CD8-positive, alpha-beta T cell (primary cell): ENCODE measurements at regions of chr13 and their contacts with region 1.

Region 1: GRCh38 chr13:39684531-39685137 is 29.2 kb downstream of the COG6 start:
- DNase-seq: peak in 2 of 9 experiments; percentile 29 to 51
- ATAC-seq: peak; percentile 46
- H3K4me3 ChIP-seq: no peak overlapping the region
- H3K4me3 Mint-ChIP-seq: no peak overlapping the region
- H3K27ac ChIP-seq: no peak overlapping the region
- H3K27ac Mint-ChIP-seq: no peak overlapping the region
- H3K4me1 ChIP-seq: no peaks in the 10 kb centered on the region
- H3K4me1 Mint-ChIP-seq: no peaks in the 10 kb centered on the region
- H3K27me3 ChIP-seq: no peaks in the 10 kb centered on the region
- H3K27me3 Mint-ChIP-seq: no peaks in the 10 kb centered on the region
- CTCF ChIP-seq: peak; percentile 59

Region 2: DNA sequence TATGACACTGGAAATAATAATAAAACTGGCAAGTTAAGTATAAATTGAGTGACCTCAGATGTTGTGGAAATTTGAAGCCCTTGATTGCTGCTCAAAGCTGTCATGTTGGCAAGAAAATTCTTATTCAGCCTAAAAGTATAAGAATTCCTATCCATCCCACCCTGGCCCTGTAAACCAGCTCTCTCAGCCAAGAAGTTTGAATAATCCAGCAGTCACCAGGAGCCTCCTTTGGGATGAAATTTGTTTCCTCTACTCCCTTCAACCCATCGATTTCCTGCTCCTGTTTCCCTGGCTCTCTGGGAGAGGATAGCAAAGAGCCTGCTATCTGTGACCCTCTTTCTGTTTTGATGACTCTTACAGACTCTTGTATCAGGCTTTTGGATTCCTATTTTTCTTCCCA is 251.0 kb before region 1 on chr13:
- CTCF ChIA-PET with region 1: no interaction called
- POLR2A ChIA-PET with region 1: no interaction called
- intact Hi-C with region 1: no loop called
- DNase-seq: no peak
- ATAC-seq: no peak
- H3K4me3 ChIP-seq: no peak overlapping the region
- H3K4me3 Mint-ChIP-seq: no peak overlapping the region
- H3K27ac ChIP-seq: no peak overlapping the region
- H3K27ac Mint-ChIP-seq: no peak overlapping the region
- H3K4me1 ChIP-seq: no peaks in the 10 kb centered on the region
- H3K4me1 Mint-ChIP-seq: no peaks in the 10 kb centered on the region
- H3K27me3 ChIP-seq: no peaks in the 10 kb centered on the region
- H3K27me3 Mint-ChIP-seq: peaks cover 25% of the 10 kb centered on the region
- CTCF ChIP-seq: no peak

Region 3: DNA sequence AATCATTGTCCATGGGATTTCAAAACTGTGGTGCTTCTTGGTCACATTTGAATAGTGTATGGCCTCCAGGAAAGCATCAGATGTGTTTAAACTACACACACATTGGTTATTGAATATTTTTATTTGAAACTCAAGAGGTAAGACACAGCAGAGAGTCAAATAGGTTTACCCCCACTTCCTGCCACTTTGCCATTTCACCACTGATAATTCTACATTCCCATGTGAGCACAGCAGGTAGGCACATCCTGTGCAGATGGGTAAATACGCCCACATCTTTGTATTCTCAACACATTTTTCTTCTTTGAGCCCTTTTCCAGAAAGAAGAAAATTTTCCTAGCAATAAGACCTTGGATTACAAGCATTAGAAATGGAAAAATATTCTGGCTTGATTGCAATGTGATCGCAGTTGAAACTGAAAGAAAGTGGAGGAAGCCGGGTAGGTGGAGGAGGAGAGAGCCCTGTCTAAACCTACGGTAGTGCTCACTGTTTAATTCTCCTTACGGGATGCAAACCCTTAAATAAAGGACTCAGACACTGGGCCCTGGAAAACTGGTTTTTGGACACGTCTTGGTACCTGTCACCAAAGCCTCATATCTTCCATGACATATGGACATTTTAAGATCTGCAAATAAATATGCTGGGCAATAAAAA is 138.6 kb after region 1 on chr13:
- CTCF ChIA-PET with region 1: no interaction called
- POLR2A ChIA-PET with region 1: no interaction called
- intact Hi-C with region 1: no loop called
- DNase-seq: no peak
- ATAC-seq: no peak
- H3K4me3 ChIP-seq: no peak overlapping the region
- H3K4me3 Mint-ChIP-seq: peak overlapping the region; percentile 68
- H3K27ac ChIP-seq: no peak overlapping the region
- H3K27ac Mint-ChIP-seq: peak overlapping the region; percentile 28
- H3K4me1 ChIP-seq: peaks cover 15% of the 10 kb centered on the region
- H3K4me1 Mint-ChIP-seq: peaks cover 17% of the 10 kb centered on the region
- H3K27me3 ChIP-seq: peaks cover 0 to 3% of the 10 kb centered on the region in 2 experiments
- H3K27me3 Mint-ChIP-seq: no peaks in the 10 kb centered on the region
- CTCF ChIP-seq: no peak

Region 4: DNA sequence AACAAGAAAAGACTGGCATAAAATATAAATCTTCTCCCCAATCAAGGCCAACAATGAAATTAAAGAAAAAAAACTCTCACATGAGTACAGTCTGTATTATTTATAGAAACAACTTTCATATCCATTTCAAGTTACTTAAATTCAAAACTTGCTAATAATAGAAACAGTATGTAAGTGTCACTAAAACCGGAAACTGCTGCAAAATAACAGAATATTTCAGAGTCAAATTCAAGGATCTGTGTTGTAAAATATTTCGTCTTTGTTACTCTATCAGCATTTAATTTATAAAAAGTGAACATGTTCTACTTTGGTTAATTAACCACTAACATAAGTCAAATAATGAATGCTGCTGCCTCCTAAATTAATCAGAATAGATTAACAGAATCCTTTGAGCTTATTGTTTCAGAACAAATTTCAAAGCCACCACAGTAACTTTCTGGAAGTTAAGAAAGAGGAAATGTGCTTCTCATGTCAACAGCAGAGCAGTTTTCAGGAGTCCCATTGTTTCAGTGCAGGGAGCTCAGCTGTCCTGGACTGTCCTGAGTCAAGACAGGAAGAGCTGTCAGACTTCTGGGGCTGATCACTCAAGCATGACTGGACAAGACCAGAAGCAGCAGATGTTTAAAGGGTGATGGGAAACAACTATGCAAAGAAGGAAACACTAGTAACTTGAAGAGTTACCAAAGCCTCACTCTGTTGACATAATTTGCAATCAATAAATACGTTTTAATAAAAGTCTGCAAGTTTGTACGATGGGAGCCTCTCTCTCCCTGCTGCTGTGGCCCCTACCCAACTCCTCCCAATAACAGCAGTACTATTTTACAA is 904.9 kb after region 1 on chr13:
- CTCF ChIA-PET with region 1: no interaction called
- POLR2A ChIA-PET with region 1: no interaction called
- intact Hi-C with region 1: loop called in 1 of 2 experiments (anchors 10 kb)
- DNase-seq: peak in 1 of 9 experiments; percentile 39
- ATAC-seq: peak; percentile 13
- H3K4me3 ChIP-seq: peak overlapping the region in 1 of 2 experiments; percentile 11
- H3K4me3 Mint-ChIP-seq: peak overlapping the region; percentile 50
- H3K27ac ChIP-seq: peak overlapping the region in 1 of 2 experiments; percentile 44
- H3K27ac Mint-ChIP-seq: peak overlapping the region; percentile 84
- H3K4me1 ChIP-seq: peaks cover 93% of the 10 kb centered on the region
- H3K4me1 Mint-ChIP-seq: peaks cover 97% of the 10 kb centered on the region
- H3K27me3 ChIP-seq: no peaks in the 10 kb centered on the region
- H3K27me3 Mint-ChIP-seq: no peaks in the 10 kb centered on the region
- CTCF ChIP-seq: no peak

Region 5: DNA sequence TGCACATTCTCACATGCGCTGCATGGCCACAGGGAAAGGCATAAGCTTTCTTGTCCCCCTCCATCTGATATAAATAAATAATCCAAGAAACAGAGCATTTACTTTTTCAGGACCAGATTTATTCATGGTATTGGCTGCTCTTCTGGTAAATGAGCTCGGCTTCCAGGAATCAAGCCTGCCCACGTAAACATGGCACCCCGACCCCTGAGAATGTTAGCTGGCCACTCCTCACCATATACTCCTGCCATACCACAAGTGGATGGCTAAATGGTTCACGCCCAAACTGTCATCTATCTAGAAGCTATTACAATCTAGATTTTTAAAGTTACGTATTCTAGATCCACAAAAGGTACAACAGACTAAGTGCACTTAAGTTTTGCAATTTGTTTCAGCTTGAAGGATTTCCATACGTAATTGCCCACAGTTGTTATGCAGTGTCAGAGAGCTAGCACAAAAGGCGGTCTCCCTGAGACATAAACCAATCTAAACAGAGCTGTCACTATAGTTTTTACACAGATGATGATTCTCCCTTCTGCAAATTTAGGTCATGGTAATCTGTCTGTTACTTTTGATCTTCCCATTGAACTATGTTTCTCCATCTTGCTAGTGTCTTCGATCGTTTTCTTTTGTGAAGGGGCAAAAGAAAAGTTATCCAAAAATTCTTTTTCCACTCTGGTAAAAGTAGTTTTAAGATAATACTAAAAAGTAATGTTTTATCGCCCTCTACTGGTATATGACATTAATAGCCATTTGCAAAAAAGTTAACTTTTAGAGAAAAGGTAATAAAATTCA is 998.0 kb after region 1 on chr13:
- CTCF ChIA-PET with region 1: interaction called, 29 read pairs
- POLR2A ChIA-PET with region 1: no interaction called
- intact Hi-C with region 1: loop called in 1 of 2 experiments (anchors 1 kb)
- DNase-seq: peak in 2 of 9 experiments; percentile 27 to 51
- ATAC-seq: peak; percentile 48
- H3K4me3 ChIP-seq: no peak overlapping the region
- H3K4me3 Mint-ChIP-seq: no peak overlapping the region
- H3K27ac ChIP-seq: no peak overlapping the region
- H3K27ac Mint-ChIP-seq: peak overlapping the region; percentile 6
- H3K4me1 ChIP-seq: peaks cover 6% of the 10 kb centered on the region
- H3K4me1 Mint-ChIP-seq: peaks cover 9% of the 10 kb centered on the region
- H3K27me3 ChIP-seq: no peaks in the 10 kb centered on the region
- H3K27me3 Mint-ChIP-seq: no peaks in the 10 kb centered on the region
- CTCF ChIP-seq: peak; percentile 87

Region 6: DNA sequence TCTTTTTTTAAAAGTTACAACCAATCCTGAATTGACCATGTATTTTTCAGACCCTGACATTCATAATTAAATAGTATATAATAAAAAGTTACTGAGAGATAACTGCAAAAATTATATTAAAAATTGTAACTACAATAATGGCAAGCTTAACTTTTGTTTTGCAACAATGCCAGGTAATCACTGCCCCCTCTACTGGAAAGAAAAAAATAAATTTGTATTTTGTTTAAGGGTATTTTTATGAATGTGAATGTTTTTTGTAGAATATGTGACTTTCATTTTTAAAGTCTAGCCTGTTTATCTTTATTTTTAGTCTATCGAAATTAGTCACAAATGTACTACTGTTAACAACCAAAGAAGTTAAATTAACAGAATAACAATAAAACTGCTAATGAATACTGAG is 1064.7 kb after region 1 on chr13:
- CTCF ChIA-PET with region 1: interaction called, 3 read pairs
- POLR2A ChIA-PET with region 1: no interaction called
- intact Hi-C with region 1: loop called in 1 of 2 experiments (anchors 2 kb)
- DNase-seq: no peak
- ATAC-seq: no peak
- H3K4me3 ChIP-seq: no peak overlapping the region
- H3K4me3 Mint-ChIP-seq: no peak overlapping the region
- H3K27ac ChIP-seq: no peak overlapping the region
- H3K27ac Mint-ChIP-seq: no peak overlapping the region
- H3K4me1 ChIP-seq: no peaks in the 10 kb centered on the region
- H3K4me1 Mint-ChIP-seq: peaks cover 2% of the 10 kb centered on the region
- H3K27me3 ChIP-seq: no peaks in the 10 kb centered on the region
- H3K27me3 Mint-ChIP-seq: no peaks in the 10 kb centered on the region
- CTCF ChIP-seq: peak; percentile 55

Region 7: GRCh38 chr13:40777166-40777808 is 1092.7 kb after region 1 on chr13:
- CTCF ChIA-PET with region 1: interaction called, 4 read pairs
- POLR2A ChIA-PET with region 1: no interaction called
- intact Hi-C with region 1: loop called in 1 of 2 experiments (anchors 1 kb)
- DNase-seq: peak in 8 of 9 experiments; percentile 18 to 77 (median 36)
- ATAC-seq: no peak
- H3K4me3 ChIP-seq: peak overlapping the region in 1 of 2 experiments; percentile 17
- H3K4me3 Mint-ChIP-seq: peak overlapping the region; percentile 76
- H3K27ac ChIP-seq: peak overlapping the region; percentile 25 to 84
- H3K27ac Mint-ChIP-seq: peak overlapping the region; percentile 97
- H3K4me1 ChIP-seq: peaks cover 24% of the 10 kb centered on the region
- H3K4me1 Mint-ChIP-seq: peaks cover 30% of the 10 kb centered on the region
- H3K27me3 ChIP-seq: no peaks in the 10 kb centered on the region
- H3K27me3 Mint-ChIP-seq: no peaks in the 10 kb centered on the region
- CTCF ChIP-seq: peak; percentile 59